Endothelial cell of umbilical vein (primary cell): ENCODE measurements at regions of chr15 and their contacts with region 1.

Region 1: DNA sequence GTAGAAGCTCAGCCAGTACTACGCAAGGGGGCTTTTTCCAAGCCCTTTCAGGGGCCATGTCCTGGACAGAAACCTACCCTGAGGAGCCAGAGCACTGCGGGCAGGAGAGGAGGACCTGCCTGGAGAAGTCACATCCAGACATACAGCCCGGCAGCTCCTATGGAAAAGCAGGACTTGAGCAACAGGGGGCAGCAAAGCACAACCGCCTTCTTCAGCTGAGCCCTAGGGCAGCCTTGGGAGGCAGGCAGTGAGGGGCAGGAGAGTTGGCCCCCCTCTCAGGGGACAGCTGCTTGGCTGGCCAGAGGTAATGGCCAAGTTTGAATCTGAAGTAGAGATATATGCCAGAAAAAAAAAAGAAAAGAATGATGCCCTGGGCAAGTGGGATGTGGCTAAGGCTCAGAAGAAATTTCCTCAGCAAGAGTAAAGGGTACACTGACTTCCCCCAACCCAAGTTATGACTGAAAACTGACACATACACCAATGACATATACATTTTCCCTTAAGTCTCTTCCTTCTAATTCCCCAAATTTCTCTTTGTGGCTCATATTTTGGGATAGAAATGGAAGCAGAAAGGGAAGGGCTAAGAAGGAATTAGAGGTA is 56.9 kb downstream of the CYP19A1 start:
- DNase-seq: peak; percentile 65
- H3K4me3 ChIP-seq: no peak overlapping the region
- H3K27ac ChIP-seq: no peak overlapping the region
- H3K4me1 ChIP-seq: no peaks in the 10 kb centered on the region
- H3K27me3 ChIP-seq: peaks cover 70 to 71% of the 10 kb centered on the region in 2 experiments
- CTCF ChIP-seq: peak; percentile 47 to 83
- POLR2A ChIP-seq: no peak

Region 2: DNA sequence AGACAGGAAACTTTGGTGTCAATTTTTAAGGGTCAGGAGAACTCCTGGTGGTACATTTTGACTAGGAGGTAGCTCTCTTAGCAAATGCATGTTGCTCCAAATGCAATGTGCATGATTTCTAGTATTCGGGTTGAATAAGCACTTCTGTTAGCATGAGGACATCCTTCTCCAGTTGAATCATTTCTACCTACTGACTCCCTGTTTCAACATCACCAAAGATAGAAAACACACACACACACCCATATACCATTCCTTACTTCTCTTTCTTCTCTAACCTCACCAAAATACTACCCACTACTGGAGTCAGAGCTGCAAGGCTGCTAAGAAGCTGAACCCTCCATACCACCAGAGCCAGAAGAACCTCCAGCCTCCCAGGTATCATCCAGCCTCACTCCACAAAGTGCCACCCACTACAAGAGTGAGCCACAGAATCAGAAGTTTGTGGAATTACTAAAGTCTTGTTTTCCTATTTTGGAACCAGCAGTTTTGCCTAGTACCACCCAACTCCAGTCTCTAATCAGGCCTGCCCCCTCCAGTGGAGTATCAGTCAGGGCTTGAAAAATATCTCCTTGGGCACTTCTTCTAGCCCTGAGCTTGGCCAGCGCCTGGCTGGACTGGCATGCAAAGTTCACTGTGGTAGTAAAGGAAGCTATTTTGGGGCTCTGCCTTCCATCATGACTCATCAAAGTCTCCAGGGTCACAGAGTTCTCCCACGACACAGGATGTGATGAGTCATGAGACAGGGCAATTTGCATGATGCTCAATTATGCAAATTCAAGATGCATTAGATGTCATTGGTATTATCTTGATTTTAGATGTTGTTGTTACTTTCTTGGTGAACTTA is 53.3 kb before region 1 on chr15:
- CTCF ChIA-PET with region 1: interaction called, 16 read pairs
- POLR2A ChIA-PET with region 1: no interaction called
- dilution Hi-C with region 1: no loop called
- intact Hi-C with region 1: no loop called
- DNase-seq: peak; percentile 60
- H3K4me3 ChIP-seq: no peak overlapping the region
- H3K27ac ChIP-seq: peak overlapping the region; percentile 11
- H3K4me1 ChIP-seq: peaks cover 27% of the 10 kb centered on the region
- H3K27me3 ChIP-seq: peaks cover 21 to 24% of the 10 kb centered on the region in 2 experiments
- CTCF ChIP-seq: no peak
- POLR2A ChIP-seq: no peak

Region 3: DNA sequence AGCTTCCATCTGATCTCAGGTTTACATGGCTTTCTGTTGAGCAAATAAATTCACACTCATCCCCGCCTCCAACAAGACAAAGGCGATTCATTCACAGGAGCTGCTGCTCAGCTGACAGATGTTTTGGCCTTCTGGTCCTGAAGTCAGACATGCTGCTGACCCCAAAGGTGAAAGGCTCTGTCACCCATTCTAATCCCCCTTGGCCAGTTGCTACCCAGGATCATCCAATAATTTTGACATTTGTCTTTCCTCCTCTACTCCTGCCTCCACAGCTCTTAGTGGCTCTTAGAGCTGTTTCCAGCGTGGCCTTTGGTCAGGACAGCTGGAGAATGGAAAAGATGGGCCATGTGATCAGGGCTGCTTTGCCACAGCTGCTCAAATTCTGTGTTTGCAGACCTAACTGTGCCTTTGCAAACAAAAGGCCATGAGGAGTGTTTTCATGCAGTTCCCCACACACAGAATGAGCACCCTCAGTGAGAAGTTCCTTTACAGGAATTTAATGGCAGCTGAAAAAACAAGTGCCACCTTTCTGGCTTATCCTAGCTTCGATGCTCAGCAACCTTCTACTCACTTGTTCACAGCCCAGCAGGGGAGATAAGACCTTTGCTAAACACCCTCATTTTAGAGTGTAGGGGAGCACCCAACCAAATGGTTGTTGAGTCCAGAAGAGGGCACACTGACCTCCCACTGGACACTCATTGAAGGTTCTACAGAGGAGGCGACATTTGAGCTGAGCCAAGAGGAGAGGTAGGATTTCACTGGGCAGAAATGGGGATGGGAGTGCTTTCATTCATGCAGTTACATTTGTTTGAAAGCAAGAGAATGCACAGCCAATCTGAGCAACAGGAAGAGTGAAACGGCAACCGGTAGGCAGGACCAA is 18.0 kb after region 1 on chr15:
- CTCF ChIA-PET with region 1: interaction called, 15 read pairs
- POLR2A ChIA-PET with region 1: no interaction called
- dilution Hi-C with region 1: no loop called
- intact Hi-C with region 1: no loop called
- DNase-seq: no peak
- H3K4me3 ChIP-seq: no peak overlapping the region
- H3K27ac ChIP-seq: no peak overlapping the region
- H3K4me1 ChIP-seq: no peaks in the 10 kb centered on the region
- H3K27me3 ChIP-seq: peaks cover 83 to 84% of the 10 kb centered on the region in 2 experiments
- CTCF ChIP-seq: no peak
- POLR2A ChIP-seq: no peak

Region 4: DNA sequence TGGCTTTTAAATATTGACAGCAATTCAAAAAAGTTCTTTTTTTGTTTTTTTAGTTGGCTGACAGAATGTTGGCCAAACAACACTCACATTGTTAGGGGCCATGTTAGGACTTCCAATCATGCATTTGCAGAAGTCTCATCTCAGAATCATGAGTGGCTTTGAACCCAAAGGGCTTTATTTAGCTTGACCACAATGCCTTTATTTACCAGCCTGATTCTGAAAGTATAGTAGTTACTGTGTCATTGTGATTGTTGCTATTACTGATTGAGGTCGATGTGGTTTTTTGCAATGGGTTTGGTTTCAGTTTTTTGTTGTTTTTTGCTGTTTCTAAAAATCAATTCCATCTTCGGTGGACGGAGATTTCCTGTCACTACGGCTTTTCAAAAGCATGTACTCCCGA is 67.2 kb after region 1 on chr15:
- CTCF ChIA-PET with region 1: no interaction called
- POLR2A ChIA-PET with region 1: no interaction called
- dilution Hi-C with region 1: no loop called
- intact Hi-C with region 1: no loop called
- DNase-seq: no peak
- H3K4me3 ChIP-seq: no peak overlapping the region
- H3K27ac ChIP-seq: no peak overlapping the region
- H3K4me1 ChIP-seq: no peaks in the 10 kb centered on the region
- H3K27me3 ChIP-seq: peaks cover 70 to 94% of the 10 kb centered on the region in 2 experiments
- CTCF ChIP-seq: no peak
- POLR2A ChIP-seq: no peak

Region 5: GRCh38 chr15:51380999-51381795 is 99.7 kb after region 1 on chr15:
- CTCF ChIA-PET with region 1: interaction called, 230 read pairs
- POLR2A ChIA-PET with region 1: no interaction called
- dilution Hi-C with region 1: no loop called
- intact Hi-C with region 1: loop called (anchors 1 kb)
- DNase-seq: peak; percentile 67
- H3K4me3 ChIP-seq: no peak overlapping the region
- H3K27ac ChIP-seq: no peak overlapping the region
- H3K4me1 ChIP-seq: no peaks in the 10 kb centered on the region
- H3K27me3 ChIP-seq: peaks cover 40 to 59% of the 10 kb centered on the region in 2 experiments
- CTCF ChIP-seq: peak; percentile 82 to 87
- POLR2A ChIP-seq: no peak

Region 6: GRCh38 chr15:51401872-51402517 is 120.5 kb after region 1 on chr15:
- CTCF ChIA-PET with region 1: interaction called, 47 read pairs
- POLR2A ChIA-PET with region 1: no interaction called
- dilution Hi-C with region 1: no loop called
- intact Hi-C with region 1: loop called (anchors 1 kb)
- DNase-seq: peak; percentile 13
- H3K4me3 ChIP-seq: no peak overlapping the region
- H3K27ac ChIP-seq: no peak overlapping the region
- H3K4me1 ChIP-seq: no peaks in the 10 kb centered on the region
- H3K27me3 ChIP-seq: peaks cover 68 to 69% of the 10 kb centered on the region in 2 experiments
- CTCF ChIP-seq: peak; percentile 73 to 83
- POLR2A ChIP-seq: no peak

Region 7: GRCh38 chr15:51647128-51647562 is 365.7 kb after region 1 on chr15:
- CTCF ChIA-PET with region 1: no interaction called
- POLR2A ChIA-PET with region 1: no interaction called
- dilution Hi-C with region 1: no loop called
- intact Hi-C with region 1: no loop called
- DNase-seq: peak; percentile 42
- H3K4me3 ChIP-seq: no peak overlapping the region
- H3K27ac ChIP-seq: no peak overlapping the region
- H3K4me1 ChIP-seq: peaks cover 2% of the 10 kb centered on the region
- H3K27me3 ChIP-seq: peaks cover 6 to 7% of the 10 kb centered on the region in 2 experiments
- CTCF ChIP-seq: no peak
- POLR2A ChIP-seq: no peak